GM12878 (cell line): ENCODE measurements at regions of chr16 and their contacts with region 1.

Region 1: GRCh38 chr16:85615852-85616606 is 2.9 kb downstream of the GSE1 start:
- DNase-seq: peak; percentile 47
- ATAC-seq: peak; percentile 68
- H3K4me3 ChIP-seq: peak overlapping the region; percentile 95; the same call in 1 of the 2 replicates
- H3K27ac ChIP-seq: peak overlapping the region; percentile 82
- H3K4me1 ChIP-seq: peaks cover 33% of the 10 kb centered on the region
- H3K27me3 ChIP-seq: no peaks in the 10 kb centered on the region
- CTCF ChIP-seq: peak; percentile 91 to 98 (median 98)
- EP300 ChIP-seq: no peak
- POLR2A ChIP-seq: peak; percentile 53; the same call in 1 of the 2 replicates
- RAD21 ChIP-seq: peak; percentile 61

Region 2: GRCh38 chr16:85420501-85421337 is 195.3 kb before region 1 on chr16:
- CTCF ChIA-PET with region 1: interaction called, 26 read pairs
- POLR2A ChIA-PET with region 1: no interaction called
- RAD21 ChIA-PET with region 1: interaction called, 6 read pairs
- SMC1A ChIA-PET with region 1: interaction called, 10 read pairs
- in situ Hi-C with region 1: loop called (anchors 25 kb)
- intact Hi-C with region 1: loop called (anchors 2 kb)
- DNase-seq: no peak
- ATAC-seq: peak; percentile 89
- H3K4me3 ChIP-seq: no peak overlapping the region
- H3K27ac ChIP-seq: no peak overlapping the region
- H3K4me1 ChIP-seq: no peaks in the 10 kb centered on the region
- H3K27me3 ChIP-seq: no peaks in the 10 kb centered on the region; a peak in 1 of 4 replicates
- CTCF ChIP-seq: peak; percentile 96 to 100 (median 98)
- EP300 ChIP-seq: no peak
- POLR2A ChIP-seq: no peak
- RAD21 ChIP-seq: peak; percentile 46; the same call in 1 of the 2 replicates

Region 3: GRCh38 chr16:85441189-85441889 is 174.7 kb before region 1 on chr16:
- CTCF ChIA-PET with region 1: interaction called, 21 read pairs
- POLR2A ChIA-PET with region 1: no interaction called
- RAD21 ChIA-PET with region 1: interaction called, 3 read pairs
- SMC1A ChIA-PET with region 1: interaction called, 7 read pairs
- in situ Hi-C with region 1: loop called (anchors 25 kb)
- intact Hi-C with region 1: no loop called
- DNase-seq: no peak
- ATAC-seq: peak; percentile 70
- H3K4me3 ChIP-seq: no peak overlapping the region
- H3K27ac ChIP-seq: no peak overlapping the region
- H3K4me1 ChIP-seq: no peaks in the 10 kb centered on the region
- H3K27me3 ChIP-seq: no peaks in the 10 kb centered on the region; a peak in 2 of 4 replicates
- CTCF ChIP-seq: peak; percentile 22 to 55 (median 23); a peak in 4 of 6 replicates
- EP300 ChIP-seq: no peak
- POLR2A ChIP-seq: no peak
- RAD21 ChIP-seq: peak; percentile 48

Region 4: GRCh38 chr16:85491058-85491771 is 124.8 kb before region 1 on chr16:
- CTCF ChIA-PET with region 1: interaction called, 26 read pairs
- POLR2A ChIA-PET with region 1: no interaction called
- RAD21 ChIA-PET with region 1: interaction called, 19 read pairs
- SMC1A ChIA-PET with region 1: interaction called, 9 read pairs
- in situ Hi-C with region 1: no loop called
- intact Hi-C with region 1: no loop called
- DNase-seq: no peak
- ATAC-seq: peak; percentile 86
- H3K4me3 ChIP-seq: no peak overlapping the region
- H3K27ac ChIP-seq: no peak overlapping the region
- H3K4me1 ChIP-seq: peaks cover 3% of the 10 kb centered on the region; the same call in 1 of the 2 replicates
- H3K27me3 ChIP-seq: peaks cover 0 to 2% of the 10 kb centered on the region in 2 experiments; a peak in 1 of 4 replicates
- CTCF ChIP-seq: peak; percentile 72 to 98 (median 98)
- EP300 ChIP-seq: no peak
- POLR2A ChIP-seq: no peak
- RAD21 ChIP-seq: peak; percentile 67

Region 5: DNA sequence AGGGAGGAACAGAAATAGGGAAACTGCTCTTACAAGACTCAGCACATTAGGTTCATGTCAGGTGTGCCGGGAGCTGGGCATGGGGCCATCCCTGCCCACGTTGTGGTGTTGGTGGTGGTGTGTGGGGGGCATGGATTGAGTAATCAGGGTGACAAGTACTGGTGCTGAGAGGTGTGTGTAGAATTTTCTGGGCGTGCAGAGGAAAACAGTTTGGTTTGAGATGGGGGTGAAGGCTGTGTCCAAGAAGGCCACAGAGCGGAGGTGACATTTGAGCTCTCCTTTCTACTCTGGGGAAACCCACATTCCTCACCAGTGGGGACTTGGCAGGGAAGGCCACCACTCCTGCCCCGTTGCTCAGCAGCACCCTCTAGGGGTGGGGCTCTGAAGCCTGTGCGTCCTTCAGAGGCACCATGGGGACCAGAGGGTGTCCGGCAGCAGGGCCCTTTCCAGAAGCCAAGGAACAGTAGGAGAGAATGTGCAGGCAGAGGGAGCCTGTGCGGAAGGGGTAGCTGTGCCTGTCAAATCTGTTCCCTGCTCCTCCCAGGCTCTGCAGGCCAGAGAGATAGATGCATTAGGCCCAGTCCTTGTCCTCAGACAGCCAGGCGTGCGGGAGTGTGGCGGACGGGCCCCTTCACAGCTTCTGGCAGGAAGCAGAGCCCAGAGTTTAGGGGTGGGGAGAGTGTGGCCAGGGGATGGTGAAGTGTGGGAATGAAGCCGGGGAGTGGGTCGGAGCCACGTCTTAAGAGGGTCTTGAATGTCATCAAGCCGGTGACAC is 51.6 kb before region 1 on chr16:
- CTCF ChIA-PET with region 1: interaction called, 52 read pairs
- POLR2A ChIA-PET with region 1: interaction called, 32 read pairs
- RAD21 ChIA-PET with region 1: interaction called, 56 read pairs
- SMC1A ChIA-PET with region 1: interaction called, 20 read pairs
- in situ Hi-C with region 1: no loop called
- intact Hi-C with region 1: no loop called
- DNase-seq: no peak
- ATAC-seq: peak; percentile 71
- H3K4me3 ChIP-seq: no peak overlapping the region; the same call in 1 of the 2 replicates
- H3K27ac ChIP-seq: no peak overlapping the region
- H3K4me1 ChIP-seq: peaks cover 27% of the 10 kb centered on the region
- H3K27me3 ChIP-seq: no peaks in the 10 kb centered on the region
- CTCF ChIP-seq: peak; percentile 62 to 76 (median 66)
- EP300 ChIP-seq: no peak
- POLR2A ChIP-seq: no peak
- RAD21 ChIP-seq: no peak

Region 6: DNA sequence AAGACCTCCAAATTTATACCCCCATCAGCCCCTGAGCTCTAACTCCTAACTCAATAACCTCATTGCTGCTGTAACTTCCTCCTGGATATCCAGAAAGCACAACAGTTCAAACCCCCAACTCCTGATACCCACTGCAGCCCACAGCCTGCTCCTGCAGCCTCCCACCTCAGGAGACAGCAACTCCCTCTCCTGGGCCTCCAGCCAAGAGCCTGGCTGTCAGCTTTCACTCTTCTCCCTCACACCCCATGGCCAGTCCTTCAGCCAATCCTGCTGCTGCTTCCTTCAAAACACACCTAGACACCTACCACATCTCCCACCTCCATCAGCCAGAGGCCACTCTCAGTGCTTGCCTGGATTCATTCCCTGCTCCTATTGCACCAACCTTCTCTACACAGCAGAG is 67.3 kb after region 1 on chr16:
- CTCF ChIA-PET with region 1: interaction called, 19 read pairs
- POLR2A ChIA-PET with region 1: interaction called, 3 read pairs
- RAD21 ChIA-PET with region 1: interaction called, 11 read pairs
- SMC1A ChIA-PET with region 1: interaction called, 5 read pairs
- in situ Hi-C with region 1: no loop called
- intact Hi-C with region 1: no loop called
- DNase-seq: no peak
- ATAC-seq: no peak
- H3K4me3 ChIP-seq: no peak overlapping the region
- H3K27ac ChIP-seq: no peak overlapping the region
- H3K4me1 ChIP-seq: peaks cover 28% of the 10 kb centered on the region
- H3K27me3 ChIP-seq: no peaks in the 10 kb centered on the region
- CTCF ChIP-seq: no peak
- EP300 ChIP-seq: no peak
- POLR2A ChIP-seq: no peak
- RAD21 ChIP-seq: no peak

Region 7: DNA sequence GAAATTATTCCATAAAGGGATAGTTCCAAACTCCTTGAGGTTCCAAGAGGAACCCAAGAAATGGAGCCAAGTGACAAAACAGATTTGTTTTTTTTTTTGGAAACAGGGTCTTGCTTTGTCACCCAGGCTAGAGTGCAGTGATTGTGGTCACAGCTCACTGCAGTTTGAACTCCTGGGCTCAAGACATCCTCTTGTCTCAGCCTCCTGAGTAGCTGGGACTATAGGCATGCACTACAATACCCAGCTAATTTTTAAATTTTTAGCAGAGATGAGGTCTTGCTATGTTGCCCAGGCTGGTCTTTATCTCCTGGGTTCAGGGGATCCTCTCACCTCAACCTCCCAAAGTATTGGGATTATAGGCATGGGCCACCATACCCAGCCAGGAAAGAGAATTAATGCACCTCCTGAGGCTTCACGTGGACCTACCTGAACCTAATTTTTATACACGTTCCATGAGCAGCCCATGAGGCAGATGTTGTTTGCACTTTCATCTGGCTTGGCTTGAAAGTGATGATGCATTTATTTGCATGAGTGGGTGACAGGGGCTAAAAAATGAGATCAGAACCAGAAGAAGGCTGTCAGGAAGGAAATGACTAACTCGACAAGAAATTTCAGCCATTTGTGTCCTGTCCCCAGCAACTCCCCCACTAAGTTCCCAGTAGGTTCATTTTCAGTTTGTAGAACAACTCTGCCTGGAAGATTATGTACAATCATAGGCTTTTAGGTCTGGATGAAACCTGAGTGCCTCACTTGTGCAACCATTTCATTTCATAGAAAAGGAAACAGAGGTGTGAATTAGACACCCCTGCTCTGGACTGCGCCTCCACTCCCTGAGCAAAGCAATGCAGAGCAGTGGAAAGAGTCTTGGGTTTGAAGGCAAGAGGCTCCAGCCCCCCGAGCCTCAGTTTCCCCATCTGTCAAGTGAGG is 272.6 kb after region 1 on chr16:
- CTCF ChIA-PET with region 1: no interaction called
- POLR2A ChIA-PET with region 1: no interaction called
- RAD21 ChIA-PET with region 1: no interaction called
- SMC1A ChIA-PET with region 1: no interaction called
- in situ Hi-C with region 1: no loop called
- intact Hi-C with region 1: no loop called
- DNase-seq: peak; percentile 89
- ATAC-seq: peak; percentile 95
- H3K4me3 ChIP-seq: peak overlapping the region; percentile 44; the same call in 1 of the 2 replicates
- H3K27ac ChIP-seq: peak overlapping the region; percentile 21
- H3K4me1 ChIP-seq: peaks cover 16% of the 10 kb centered on the region
- H3K27me3 ChIP-seq: no peaks in the 10 kb centered on the region; a peak in 1 of 4 replicates
- CTCF ChIP-seq: no peak
- EP300 ChIP-seq: peak in 1 of 2 experiments; percentile 89; a peak in 2 of 4 replicates
- POLR2A ChIP-seq: no peak
- RAD21 ChIP-seq: no peak